GM13977 (cell line): ENCODE measurements at regions of chr2 and their contacts with region 1.

Region 1: DNA sequence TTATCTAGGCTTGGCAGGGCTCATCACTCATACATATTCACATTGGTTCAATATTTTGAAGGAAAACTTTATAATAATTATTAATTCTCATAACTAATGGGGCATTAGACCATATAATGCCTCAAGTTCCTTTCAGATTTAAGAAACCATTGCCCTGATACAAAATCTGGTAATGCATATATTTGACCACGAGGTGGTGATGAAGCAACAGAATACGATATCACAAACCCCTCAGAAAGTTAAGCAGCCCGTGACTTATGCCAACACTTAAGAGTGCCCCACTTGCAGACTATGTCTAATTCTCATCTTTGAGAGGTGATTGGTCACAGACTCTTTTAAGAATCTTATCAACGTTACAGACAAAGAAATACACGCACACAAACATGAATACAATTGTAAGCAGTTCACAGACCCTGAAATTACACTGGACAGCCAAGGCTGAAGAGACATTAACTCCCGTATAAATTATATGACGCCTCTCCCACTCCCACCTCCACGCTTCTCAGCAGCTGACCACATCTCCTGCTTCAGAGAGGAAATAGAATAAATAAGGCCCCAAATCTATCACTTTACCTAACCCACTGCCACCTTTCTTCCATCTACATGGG is 20.7 kb upstream of the DNAH6 start:
- DNase-seq: peak; percentile 39
- CTCF ChIP-seq: peak; percentile 65

Region 2: GRCh38 chr2:84077492-84077891 is 418.2 kb before region 1 on chr2:
- in situ Hi-C with region 1: no loop called
- DNase-seq: peak; percentile 3
- CTCF ChIP-seq: peak; percentile 49

Region 3: GRCh38 chr2:84126530-84126929 is 369.1 kb before region 1 on chr2:
- in situ Hi-C with region 1: no loop called
- DNase-seq: no peak
- CTCF ChIP-seq: no peak

Region 4: GRCh38 chr2:84861539-84861938 is 365.9 kb after region 1 on chr2:
- in situ Hi-C with region 1: loop called (anchors 5 kb)
- DNase-seq: no peak
- CTCF ChIP-seq: no peak